ENCODE measurements at regions of chr11 and their contacts with region 1.

Region 1: GRCh38 chr11:117985953-117986887 is at the start of gene IL10RA:
- H3K4me3 Mint-ChIP-seq: peak within 1 kb of the TSS; percentile 90
- H3K27ac Mint-ChIP-seq: peak within 1 kb of the TSS; percentile 99
- H3K4me1 Mint-ChIP-seq: peaks cover 51% of the 10 kb centered on the region
- H3K27me3 Mint-ChIP-seq: no peaks in the 10 kb centered on the region

Region 2: DNA sequence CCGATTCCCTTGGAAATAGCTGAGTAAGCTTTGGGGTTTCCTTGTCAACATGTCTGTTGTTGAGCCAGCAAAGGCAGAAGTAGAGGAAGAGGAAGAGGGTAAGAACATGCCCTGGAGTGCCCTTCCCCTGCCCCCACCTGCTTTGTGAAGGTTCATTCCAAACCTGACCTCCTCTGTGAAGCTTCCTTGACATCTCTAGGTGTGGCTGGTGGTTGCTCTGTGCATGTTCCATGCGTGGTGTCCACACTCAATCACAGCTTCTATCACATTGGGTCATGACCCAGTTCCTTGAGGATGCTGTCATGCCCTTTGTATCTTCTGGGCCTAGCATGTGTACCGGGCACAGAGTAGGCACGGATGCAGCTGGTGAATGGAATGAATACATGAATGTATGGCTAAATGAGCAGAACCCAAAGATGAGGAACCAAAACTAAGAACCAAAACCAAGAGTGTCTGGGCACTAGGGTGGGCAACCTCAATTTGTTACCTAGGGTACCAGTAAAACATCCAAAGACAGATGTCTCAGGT is 86.0 kb before region 1 on chr11:
- intact Hi-C with region 1: no loop called
- H3K4me3 Mint-ChIP-seq: no peak overlapping the region
- H3K27ac Mint-ChIP-seq: peak overlapping the region; percentile 67
- H3K4me1 Mint-ChIP-seq: peaks cover 33% of the 10 kb centered on the region
- H3K27me3 Mint-ChIP-seq: peaks cover 7% of the 10 kb centered on the region

Region 3: DNA sequence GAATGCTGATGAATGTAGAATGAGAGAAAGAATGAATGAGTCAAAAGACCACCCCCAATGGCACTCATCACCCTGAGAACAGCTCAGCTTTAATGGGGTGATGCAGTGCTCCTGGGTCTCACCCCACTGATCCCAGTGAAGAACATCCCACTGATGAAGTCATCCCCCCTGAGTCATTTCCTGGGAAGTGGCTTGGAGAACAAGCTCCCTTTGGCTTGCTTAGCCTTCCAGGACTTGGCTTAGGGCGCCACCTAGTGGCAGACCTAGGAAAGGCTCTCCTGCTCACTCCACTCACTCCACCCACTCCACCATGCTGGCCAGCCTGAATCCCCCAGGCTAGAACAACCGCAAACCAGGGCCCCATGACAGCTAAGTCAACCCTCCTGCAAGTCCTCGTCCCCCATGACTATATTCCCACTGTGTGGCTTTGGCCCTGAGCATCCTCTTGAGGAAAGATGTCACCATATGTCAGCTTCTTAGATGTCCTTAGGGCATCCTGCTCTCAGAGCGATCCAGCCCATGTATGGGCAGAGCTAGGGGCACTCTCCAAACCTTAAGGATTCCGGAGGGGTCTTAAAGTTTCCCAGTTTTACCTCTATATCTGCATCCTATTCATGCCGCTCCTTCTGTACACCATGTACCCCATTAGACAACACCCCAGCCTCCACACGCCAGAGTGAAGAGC is 39.2 kb before region 1 on chr11:
- intact Hi-C with region 1: loop called (anchors 5 kb)
- H3K4me3 Mint-ChIP-seq: no peak overlapping the region
- H3K27ac Mint-ChIP-seq: peak overlapping the region; percentile 62
- H3K4me1 Mint-ChIP-seq: peaks cover 83% of the 10 kb centered on the region
- H3K27me3 Mint-ChIP-seq: no peaks in the 10 kb centered on the region

Region 4: GRCh38 chr11:118002541-118003423 is 16.6 kb after region 1 on chr11:
- intact Hi-C with region 1: loop called (anchors 2 kb)
- H3K4me3 Mint-ChIP-seq: no peak overlapping the region
- H3K27ac Mint-ChIP-seq: peak overlapping the region; percentile 92
- H3K4me1 Mint-ChIP-seq: peaks cover 97% of the 10 kb centered on the region
- H3K27me3 Mint-ChIP-seq: no peaks in the 10 kb centered on the region